ENCODE measurements at regions of chr7 and their contacts with region 1.

Region 1: GRCh38 chr7:43454936-43455518 is 127.9 kb upstream of the STK17A start:
- DNase-seq: peak; percentile 66
- H3K4me3 ChIP-seq: no peak overlapping the region
- H3K27ac ChIP-seq: no peak overlapping the region
- H3K4me1 ChIP-seq: peaks cover 5% of the 10 kb centered on the region
- H3K27me3 ChIP-seq: no peaks in the 10 kb centered on the region
- CTCF ChIP-seq: peak; percentile 27 to 51

Region 2: DNA sequence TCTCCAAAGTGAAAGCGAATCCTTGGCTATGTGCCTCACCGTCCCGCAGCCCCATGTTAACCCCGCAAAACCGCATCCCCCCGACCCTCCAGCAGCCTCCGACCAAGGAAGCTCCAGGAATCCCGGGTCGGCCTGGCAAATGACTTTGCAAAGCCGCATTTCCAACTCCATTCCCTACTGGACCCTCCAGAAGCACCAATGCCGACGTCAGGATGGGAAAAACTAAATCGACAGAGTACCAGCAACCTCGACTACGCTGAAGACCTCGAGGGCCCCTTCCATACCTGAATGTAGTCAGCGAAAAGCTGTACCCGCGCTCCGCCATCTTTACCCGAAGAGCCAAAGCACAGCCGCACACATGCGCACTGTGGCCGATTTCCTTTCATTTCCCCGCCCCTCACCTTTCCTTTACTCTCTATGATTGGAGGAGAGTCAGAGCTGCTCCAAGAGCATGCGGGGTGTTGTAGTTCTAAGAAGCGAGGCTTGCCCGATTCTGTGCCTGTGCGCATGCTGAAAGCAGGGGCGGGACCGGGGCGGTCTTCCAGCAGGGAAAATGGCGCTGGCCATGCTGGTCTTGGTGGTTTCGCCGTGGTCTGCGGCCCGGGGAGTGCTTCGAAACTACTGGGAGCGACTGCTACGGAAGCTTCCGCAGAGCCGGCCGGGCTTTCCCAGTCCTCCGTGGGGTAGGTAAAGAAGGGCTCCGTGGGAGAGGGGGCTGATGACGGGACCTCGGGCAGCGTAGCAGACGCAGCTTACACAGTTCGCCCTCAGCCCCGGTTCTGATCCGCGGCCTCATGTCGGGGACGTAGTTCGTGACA is 523.0 kb before region 1 on chr7 and contains the starts of genes MRPL32 and PSMA2:
- CTCF ChIA-PET with region 1: no interaction called
- dilution Hi-C with region 1: no loop called
- in situ Hi-C with region 1: loop called in 1 of 2 experiments (anchors 25 kb)
- intact Hi-C with region 1: no loop called
- DNase-seq: peak; percentile 97
- H3K4me3 ChIP-seq: peak within 1 kb of the TSS; percentile 78 to 92 (median 88)
- H3K27ac ChIP-seq: peak within 1 kb of the TSS; percentile 91
- H3K4me1 ChIP-seq: peaks cover 29% of the 10 kb centered on the region
- H3K27me3 ChIP-seq: no peaks in the 10 kb centered on the region
- CTCF ChIP-seq: no peak
- total RNA-seq, gene MRPL32: 29.2 to 77.0 TPM
- total RNA-seq, gene PSMA2: 54.0 to 97.0 TPM

Region 3: DNA sequence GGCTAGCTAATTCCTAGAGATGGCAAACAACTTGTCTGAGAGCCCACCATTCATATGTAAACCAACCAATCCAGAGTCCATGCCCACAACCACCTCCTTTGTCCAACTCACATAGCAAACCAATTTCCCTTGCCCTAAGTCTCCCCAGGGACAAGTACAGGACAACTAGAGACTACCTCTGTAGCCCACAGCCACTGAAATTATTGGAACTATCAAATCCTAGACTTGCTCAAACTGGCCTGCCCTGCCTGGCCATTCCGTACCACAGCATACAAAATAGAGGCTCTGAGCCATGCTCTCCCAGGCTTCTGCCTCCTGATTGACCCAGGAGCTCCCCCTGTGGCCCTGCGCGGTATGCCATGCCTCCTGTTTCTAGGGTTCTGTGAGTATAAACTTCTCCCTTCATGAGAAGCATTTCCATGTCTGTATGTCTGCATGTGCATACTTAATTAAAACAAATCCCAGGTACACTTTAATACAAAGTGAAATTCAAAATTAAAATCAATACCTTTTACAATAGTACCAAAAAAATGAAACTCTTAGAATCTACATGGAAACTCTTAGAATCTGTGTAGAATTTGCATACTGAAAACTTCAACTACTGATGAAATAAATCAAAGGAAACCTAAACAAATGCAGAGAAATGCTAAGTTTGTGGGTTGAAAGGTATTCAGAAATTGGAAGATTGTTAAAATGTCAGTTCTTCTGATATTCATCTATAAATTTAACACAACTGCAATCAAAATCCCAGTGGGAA is 346.6 kb before region 1 on chr7:
- CTCF ChIA-PET with region 1: interaction called, 3 read pairs
- dilution Hi-C with region 1: no loop called
- in situ Hi-C with region 1: no loop called
- intact Hi-C with region 1: loop called (anchors 10 kb)
- DNase-seq: peak; percentile 50
- H3K4me3 ChIP-seq: no peak overlapping the region
- H3K27ac ChIP-seq: no peak overlapping the region
- H3K4me1 ChIP-seq: peaks cover 9% of the 10 kb centered on the region
- H3K27me3 ChIP-seq: peaks cover 29% of the 10 kb centered on the region
- CTCF ChIP-seq: peak; percentile 98 to 99

Region 4: GRCh38 chr7:43314379-43315189 is 140.4 kb before region 1 on chr7:
- CTCF ChIA-PET with region 1: no interaction called
- dilution Hi-C with region 1: no loop called
- in situ Hi-C with region 1: no loop called
- intact Hi-C with region 1: loop called (anchors 2 kb)
- DNase-seq: no peak
- H3K4me3 ChIP-seq: no peak overlapping the region
- H3K27ac ChIP-seq: no peak overlapping the region
- H3K4me1 ChIP-seq: no peaks in the 10 kb centered on the region
- H3K27me3 ChIP-seq: no peaks in the 10 kb centered on the region
- CTCF ChIP-seq: peak; percentile 2 to 40

Region 5: GRCh38 chr7:43522406-43523156 is 67.6 kb after region 1 on chr7:
- CTCF ChIA-PET with region 1: no interaction called
- dilution Hi-C with region 1: no loop called
- in situ Hi-C with region 1: no loop called
- intact Hi-C with region 1: no loop called
- DNase-seq: peak; percentile 98
- H3K4me3 ChIP-seq: no peak overlapping the region
- H3K27ac ChIP-seq: peak overlapping the region; percentile 58
- H3K4me1 ChIP-seq: peaks cover 32% of the 10 kb centered on the region
- H3K27me3 ChIP-seq: no peaks in the 10 kb centered on the region
- CTCF ChIP-seq: no peak

Region 6: DNA sequence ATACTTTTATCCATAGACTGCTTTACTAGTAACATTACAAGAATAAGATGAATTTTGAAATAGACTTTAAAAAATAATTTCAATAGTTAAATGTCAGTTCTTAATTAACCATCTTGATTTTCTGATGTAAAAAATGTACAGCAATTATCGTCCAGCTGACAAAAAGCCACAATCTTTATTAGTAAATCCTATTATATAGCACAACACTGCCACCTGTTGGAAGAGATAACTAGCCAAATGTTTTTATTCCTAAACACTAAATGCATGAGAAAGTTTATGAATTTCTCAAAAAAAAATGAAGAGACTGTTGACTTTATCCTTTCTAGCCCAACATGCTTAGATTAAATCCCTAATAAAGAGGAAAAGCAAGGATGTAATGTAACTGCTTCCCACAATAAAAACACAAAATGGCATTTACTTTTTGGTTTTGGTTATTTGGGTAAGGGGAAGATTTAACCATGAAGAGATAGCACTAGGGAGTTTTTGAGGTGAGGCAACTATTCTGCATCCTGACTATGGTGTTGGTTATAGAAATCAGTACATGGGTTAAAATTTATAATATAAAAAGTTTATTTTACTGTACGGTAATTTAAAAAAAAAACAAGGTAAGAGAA is 266.3 kb after region 1 on chr7:
- CTCF ChIA-PET with region 1: no interaction called
- dilution Hi-C with region 1: no loop called
- in situ Hi-C with region 1: no loop called
- intact Hi-C with region 1: loop called (anchors 2 kb)
- DNase-seq: no peak
- H3K4me3 ChIP-seq: no peak overlapping the region
- H3K27ac ChIP-seq: no peak overlapping the region
- H3K4me1 ChIP-seq: peaks cover 4% of the 10 kb centered on the region
- H3K27me3 ChIP-seq: no peaks in the 10 kb centered on the region
- CTCF ChIP-seq: peak; percentile 50 to 55